ENCODE measurements at regions of chrX and their contacts with region 1.

Region 1: GRCh38 chrX:133911825-133912495 is 73.4 kb downstream of the GPC3 start:
- DNase-seq: peak; percentile 59 to 68
- H3K4me3 ChIP-seq: no peak overlapping the region
- H3K4me1 ChIP-seq: peaks cover 26% of the 10 kb centered on the region
- H3K27me3 ChIP-seq: no peaks in the 10 kb centered on the region

Region 2: GRCh38 chrX:133390678-133391077 is 521.3 kb before region 1 on chrX:
- in situ Hi-C with region 1: no loop called
- DNase-seq: peak in 1 of 2 experiments; percentile 44
- H3K4me3 ChIP-seq: no peak overlapping the region
- H3K4me1 ChIP-seq: peaks cover 71% of the 10 kb centered on the region
- H3K27me3 ChIP-seq: no peaks in the 10 kb centered on the region

Region 3: GRCh38 chrX:134026565-134027311 is 114.8 kb after region 1 on chrX:
- in situ Hi-C with region 1: loop called (anchors 10 kb)
- DNase-seq: peak; percentile 89 to 92
- H3K4me3 ChIP-seq: no peak overlapping the region
- H3K4me1 ChIP-seq: peaks cover 28% of the 10 kb centered on the region
- H3K27me3 ChIP-seq: no peaks in the 10 kb centered on the region